AG04449 (cell line): ENCODE measurements at regions of chr1 and their contacts with region 1.

Region 1: DNA sequence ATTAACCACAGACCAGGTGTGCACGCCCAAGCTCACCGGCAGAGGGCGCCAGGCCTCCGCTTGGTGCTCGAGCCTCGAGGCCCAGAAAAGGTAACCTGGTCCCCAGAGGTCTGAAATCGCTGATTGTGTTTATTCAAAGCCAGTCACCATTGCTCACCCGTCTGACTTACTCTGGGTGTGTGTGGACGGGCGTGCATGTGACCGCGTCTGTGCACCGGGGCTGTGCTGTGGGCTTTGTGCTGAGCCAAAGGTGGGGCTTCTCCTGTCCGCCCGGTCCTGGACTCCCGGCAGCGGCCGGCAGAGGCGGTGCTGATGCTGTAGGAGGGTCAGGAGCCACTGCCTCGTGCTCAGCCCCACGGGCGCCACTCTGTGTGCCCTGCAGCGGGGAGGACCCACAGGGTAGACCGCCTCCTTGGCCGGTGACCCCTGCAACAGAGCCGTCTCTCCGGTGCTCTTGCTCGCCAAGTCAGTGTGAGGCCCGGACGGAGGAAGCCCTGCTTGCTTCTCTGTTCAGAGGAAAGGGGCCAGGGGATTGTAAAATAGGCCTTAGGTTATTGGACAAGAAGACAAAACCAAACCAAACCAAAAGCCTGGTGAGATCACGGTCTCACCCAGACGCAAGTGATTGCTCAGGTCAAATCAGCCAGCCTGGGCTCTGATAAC is 32.0 kb upstream of the BTG2 start:
- DNase-seq: peak; percentile 17
- H3K4me3 ChIP-seq: peak overlapping the region; percentile 25
- CTCF ChIP-seq: peak; percentile 96

Region 2: DNA sequence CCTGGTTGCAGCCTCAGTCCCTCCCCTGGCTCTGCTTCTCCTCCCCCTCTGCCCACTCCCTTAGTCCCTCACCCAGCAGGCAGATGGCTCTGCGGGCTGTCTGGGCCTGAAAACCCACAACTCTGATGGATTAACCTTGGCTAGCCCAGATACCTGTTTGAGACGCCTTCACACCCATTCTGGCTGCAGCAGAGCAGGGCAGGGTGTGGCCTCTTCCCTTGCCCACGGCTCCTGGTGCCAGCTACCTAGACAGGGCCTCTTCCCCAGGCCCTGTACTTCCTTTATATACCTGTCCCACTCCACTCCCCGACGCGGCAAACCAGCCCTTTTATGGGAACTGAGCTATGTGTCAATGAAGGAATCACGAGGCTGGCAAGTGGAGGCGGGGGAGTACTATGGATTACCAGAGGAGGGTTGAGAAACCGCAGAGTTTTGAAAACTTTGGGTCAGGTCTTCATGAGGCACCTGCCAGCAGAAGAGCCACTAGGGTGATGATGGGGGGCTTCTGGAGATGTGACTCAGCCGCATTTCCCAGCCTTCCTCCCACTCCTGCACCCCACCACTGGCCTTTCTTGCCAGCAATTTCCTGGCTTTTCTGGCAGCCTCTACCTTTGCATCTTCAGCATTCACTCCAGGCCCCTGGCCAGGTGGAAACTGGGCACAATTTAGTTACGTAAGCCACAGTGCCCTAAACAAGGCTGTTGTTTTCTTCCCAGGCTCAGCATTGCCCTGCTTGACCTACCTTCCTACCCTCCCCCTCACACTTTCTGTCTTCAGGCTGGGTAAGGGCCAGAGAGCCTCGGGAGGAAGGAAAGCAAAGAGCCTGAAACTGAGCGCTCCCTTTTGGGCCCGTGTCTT is 86.7 kb before region 1 on chr1 and contains the start of gene CHI3L1:
- CTCF ChIA-PET with region 1: no interaction called
- POLR2A ChIA-PET with region 1: no interaction called
- DNase-seq: no peak
- H3K4me3 ChIP-seq: no peak within 1 kb of the TSS
- CTCF ChIP-seq: no peak

Region 3: GRCh38 chr1:203290261-203291089 is 17.1 kb after region 1 on chr1:
- CTCF ChIA-PET with region 1: interaction called, 250 read pairs
- POLR2A ChIA-PET with region 1: no interaction called
- DNase-seq: no peak
- H3K4me3 ChIP-seq: peak overlapping the region; percentile 12
- CTCF ChIP-seq: no peak

Region 4: DNA sequence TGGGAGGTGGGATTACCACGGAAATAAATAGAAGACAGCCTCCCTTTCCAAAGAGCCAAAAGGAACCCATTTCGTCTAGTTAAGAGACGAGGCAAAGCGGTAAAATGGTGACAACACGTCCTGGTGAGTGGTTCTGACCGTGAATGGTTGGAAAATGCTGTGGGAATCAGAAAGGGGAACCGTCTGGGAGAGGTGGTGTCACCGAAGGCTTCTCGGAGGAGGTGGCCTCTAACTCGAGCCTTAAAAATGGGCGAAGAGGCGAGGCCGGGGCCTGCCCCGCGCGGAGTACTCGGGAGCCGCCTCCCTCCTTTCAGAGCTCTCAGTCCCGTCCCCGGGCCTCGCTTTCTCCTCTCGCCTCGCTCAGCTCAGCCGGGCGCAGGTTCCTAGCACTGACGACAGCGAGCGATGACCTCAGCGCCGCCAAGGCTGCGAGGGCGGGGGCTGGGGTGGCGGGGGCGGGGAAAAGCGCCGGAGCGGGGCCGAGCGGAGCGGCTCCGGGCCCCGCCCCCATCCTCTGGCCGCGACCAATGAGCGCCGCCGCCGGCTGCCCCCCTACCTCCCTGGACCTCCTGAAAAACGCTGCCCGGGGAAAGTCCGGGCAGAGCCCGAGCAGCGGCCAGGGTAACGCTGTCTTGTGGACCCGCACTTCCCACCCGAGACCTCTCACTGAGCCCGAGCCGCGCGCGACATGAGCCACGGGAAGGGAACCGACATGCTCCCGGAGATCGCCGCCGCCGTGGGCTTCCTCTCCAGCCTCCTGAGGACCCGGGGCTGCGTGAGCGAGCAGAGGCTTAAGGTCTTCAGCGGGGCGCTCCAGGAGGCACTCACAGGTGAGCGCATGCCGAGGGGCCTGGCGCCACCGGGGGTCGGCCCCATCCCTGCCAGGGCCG is 31.8 kb after region 1 on chr1 and contains the start of gene BTG2:
- CTCF ChIA-PET with region 1: interaction called, 154 read pairs
- POLR2A ChIA-PET with region 1: no interaction called
- DNase-seq: no peak
- H3K4me3 ChIP-seq: peak within 1 kb of the TSS; percentile 85
- CTCF ChIP-seq: no peak

Region 5: GRCh38 chr1:203326830-203327683 is 53.7 kb after region 1 on chr1:
- CTCF ChIA-PET with region 1: interaction called, 152 read pairs
- POLR2A ChIA-PET with region 1: no interaction called
- DNase-seq: no peak
- H3K4me3 ChIP-seq: peak overlapping the region; percentile 63
- CTCF ChIP-seq: no peak